IMR-90 (cell line): ENCODE measurements at regions of chr11 and their contacts with region 1.

Region 1: GRCh38 chr11:115324581-115325432 is 179.4 kb downstream of the CADM1 start:
- DNase-seq: peak; percentile 75
- ATAC-seq: peak; percentile 75
- H3K4me3 ChIP-seq: no peak overlapping the region
- H3K27ac ChIP-seq: no peak overlapping the region
- H3K4me1 ChIP-seq: peaks cover 2% of the 10 kb centered on the region; the same call in 1 of the 2 replicates
- H3K27me3 ChIP-seq: no peaks in the 10 kb centered on the region
- CTCF ChIP-seq: peak; percentile 83
- POLR2A ChIP-seq: no peak
- RAD21 ChIP-seq: peak; percentile 91

Region 2: DNA sequence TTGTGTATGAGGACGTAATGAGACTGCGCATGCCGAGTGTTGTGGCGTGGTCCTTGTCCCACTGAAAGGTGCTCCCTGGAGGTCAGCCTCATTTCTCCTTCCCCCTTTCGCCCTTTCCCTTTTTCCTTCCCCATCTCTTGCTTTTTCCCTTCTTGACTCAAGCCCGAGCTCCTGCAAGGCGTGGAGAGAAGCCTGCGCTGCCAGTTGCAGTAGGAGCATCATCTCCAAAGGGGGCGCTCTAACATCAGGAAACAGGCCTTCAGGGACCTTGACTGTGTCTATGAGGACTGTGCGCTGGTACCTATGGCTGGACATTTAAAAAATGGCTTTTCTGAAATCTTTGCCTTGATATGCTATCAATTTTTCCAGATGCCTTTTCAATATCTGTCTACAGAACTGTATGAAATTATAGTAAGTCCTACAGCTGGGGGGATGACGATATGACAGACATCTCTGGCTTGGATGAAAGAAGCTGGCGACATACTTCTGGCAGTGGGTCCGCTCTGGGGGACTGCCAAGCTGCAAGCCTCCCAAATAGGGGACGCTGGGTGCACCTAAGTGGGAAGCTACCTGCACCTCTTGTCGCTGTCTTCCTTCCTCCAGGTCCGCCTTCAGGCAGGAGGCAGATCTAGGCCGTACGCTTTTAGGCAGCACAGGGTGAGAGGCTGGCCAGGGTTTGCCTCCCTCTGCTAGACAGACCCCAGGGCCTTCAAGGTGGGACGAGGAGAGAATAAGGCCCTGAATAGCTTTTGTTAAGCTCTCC is 550.0 kb before region 1 on chr11:
- CTCF ChIA-PET with region 1: no interaction called
- POLR2A ChIA-PET with region 1: no interaction called
- dilution Hi-C with region 1: no loop called
- in situ Hi-C with region 1: no loop called
- intact Hi-C with region 1: loop called (anchors 1 kb)
- DNase-seq: peak; percentile 46
- ATAC-seq: peak; percentile 98
- H3K4me3 ChIP-seq: no peak overlapping the region
- H3K27ac ChIP-seq: no peak overlapping the region
- H3K4me1 ChIP-seq: no peaks in the 10 kb centered on the region
- H3K27me3 ChIP-seq: peaks cover 2% of the 10 kb centered on the region; the same call in 1 of the 2 replicates
- CTCF ChIP-seq: peak; percentile 78
- POLR2A ChIP-seq: no peak
- RAD21 ChIP-seq: peak; percentile 89

Region 3: GRCh38 chr11:115180272-115180671 is 144.5 kb before region 1 on chr11:
- CTCF ChIA-PET with region 1: no interaction called
- POLR2A ChIA-PET with region 1: no interaction called
- dilution Hi-C with region 1: no loop called
- in situ Hi-C with region 1: no loop called
- intact Hi-C with region 1: no loop called
- DNase-seq: no peak
- ATAC-seq: no peak
- H3K4me3 ChIP-seq: no peak overlapping the region
- H3K27ac ChIP-seq: no peak overlapping the region
- H3K4me1 ChIP-seq: no peaks in the 10 kb centered on the region
- H3K27me3 ChIP-seq: no peaks in the 10 kb centered on the region
- CTCF ChIP-seq: no peak
- POLR2A ChIP-seq: no peak
- RAD21 ChIP-seq: no peak

Region 4: DNA sequence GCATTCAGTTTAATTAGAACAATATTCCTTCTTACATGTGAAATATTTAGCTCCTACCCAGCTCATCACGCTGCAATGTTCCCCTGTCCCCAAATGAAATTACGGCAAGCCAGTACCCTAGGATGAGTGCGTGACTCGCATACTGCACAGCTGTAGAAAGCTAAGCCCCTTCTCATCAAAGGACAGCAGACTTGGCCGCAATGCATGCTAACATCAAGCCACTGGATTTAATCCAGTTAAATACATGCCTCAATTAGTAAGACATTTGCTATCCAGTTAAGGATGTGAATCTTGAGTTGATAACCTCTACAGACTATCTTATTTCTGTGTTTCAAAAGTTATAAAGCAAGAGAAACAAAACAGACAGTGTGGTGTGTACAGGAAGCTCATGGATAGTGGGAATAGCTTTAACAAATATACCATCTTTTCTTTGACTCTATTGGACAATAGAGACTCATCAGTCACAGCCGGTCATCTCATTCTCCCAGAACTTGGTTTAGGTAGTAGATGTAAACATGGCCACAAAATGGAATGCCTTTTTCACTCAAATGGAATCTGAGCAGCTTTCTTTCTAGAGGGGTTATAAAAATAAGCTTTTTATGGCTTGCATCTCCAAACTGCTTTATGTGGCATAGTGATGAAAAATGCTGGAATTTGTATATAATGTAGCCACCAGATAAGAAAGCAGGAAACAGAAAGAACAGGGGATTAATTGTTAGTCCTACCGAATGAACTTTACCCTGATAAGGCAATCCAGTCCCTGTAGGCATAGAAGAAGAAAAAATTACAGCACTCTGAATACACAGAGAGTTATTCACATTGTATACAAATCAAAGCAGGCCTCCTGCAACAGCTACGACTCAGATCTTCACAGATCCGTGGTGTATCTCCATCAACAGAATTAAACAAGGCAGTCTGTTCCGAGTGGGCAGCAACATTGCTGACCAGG is 44.7 kb before region 1 on chr11:
- CTCF ChIA-PET with region 1: no interaction called
- POLR2A ChIA-PET with region 1: no interaction called
- dilution Hi-C with region 1: no loop called
- in situ Hi-C with region 1: no loop called
- intact Hi-C with region 1: no loop called
- DNase-seq: peak; percentile 91
- ATAC-seq: peak; percentile 88
- H3K4me3 ChIP-seq: peak overlapping the region; percentile 2; the same call in 1 of the 2 replicates
- H3K27ac ChIP-seq: peak overlapping the region; percentile 88
- H3K4me1 ChIP-seq: peaks cover 14% of the 10 kb centered on the region
- H3K27me3 ChIP-seq: no peaks in the 10 kb centered on the region
- CTCF ChIP-seq: no peak
- POLR2A ChIP-seq: no peak
- RAD21 ChIP-seq: no peak

Region 5: GRCh38 chr11:115334932-115335788 is 10.4 kb after region 1 on chr11:
- CTCF ChIA-PET with region 1: no interaction called
- POLR2A ChIA-PET with region 1: no interaction called
- dilution Hi-C with region 1: no loop called
- in situ Hi-C with region 1: no loop called
- intact Hi-C with region 1: no loop called
- DNase-seq: peak; percentile 52
- ATAC-seq: peak; percentile 57
- H3K4me3 ChIP-seq: no peak overlapping the region
- H3K27ac ChIP-seq: no peak overlapping the region
- H3K4me1 ChIP-seq: no peaks in the 10 kb centered on the region
- H3K27me3 ChIP-seq: no peaks in the 10 kb centered on the region
- CTCF ChIP-seq: peak; percentile 73
- POLR2A ChIP-seq: no peak
- RAD21 ChIP-seq: peak; percentile 76

Region 6: GRCh38 chr11:115581871-115582639 is 257.2 kb after region 1 on chr11:
- CTCF ChIA-PET with region 1: no interaction called
- POLR2A ChIA-PET with region 1: no interaction called
- dilution Hi-C with region 1: no loop called
- in situ Hi-C with region 1: no loop called
- intact Hi-C with region 1: no loop called
- DNase-seq: peak; percentile 5
- ATAC-seq: no peak
- H3K4me3 ChIP-seq: no peak overlapping the region
- H3K27ac ChIP-seq: no peak overlapping the region
- H3K4me1 ChIP-seq: peaks cover 1% of the 10 kb centered on the region; the same call in 1 of the 2 replicates
- H3K27me3 ChIP-seq: peaks cover 8% of the 10 kb centered on the region
- CTCF ChIP-seq: 0 out of 2 replicates have a peak, but pooled peaks have one; percentile 4
- POLR2A ChIP-seq: no peak
- RAD21 ChIP-seq: no peak

Region 7: DNA sequence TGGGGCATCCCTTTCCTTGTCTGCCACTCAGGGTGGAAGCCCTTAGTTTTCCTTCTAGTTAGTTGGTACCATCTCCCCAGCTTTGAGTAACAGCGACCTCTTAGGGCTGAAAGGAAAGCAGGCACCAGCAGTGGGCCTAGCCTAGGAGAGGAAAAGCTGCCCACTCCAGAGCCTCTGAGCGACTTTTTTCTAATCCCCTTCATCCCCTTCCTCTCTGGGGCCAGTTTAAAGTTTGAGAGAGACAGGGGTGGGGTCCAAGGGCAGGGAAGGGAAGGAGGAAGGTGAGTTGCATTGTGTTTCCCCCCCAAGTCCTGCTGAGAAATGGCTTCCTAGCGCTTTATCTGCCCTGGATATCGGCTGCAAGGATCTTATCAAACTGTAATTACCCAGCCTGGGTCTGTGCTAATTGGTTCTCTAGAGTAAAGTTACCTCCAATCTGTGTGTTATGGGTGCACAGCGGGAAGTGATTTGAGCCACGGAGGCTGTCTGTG is 753.3 kb after region 1 on chr11:
- CTCF ChIA-PET with region 1: no interaction called
- POLR2A ChIA-PET with region 1: no interaction called
- dilution Hi-C with region 1: no loop called
- in situ Hi-C with region 1: no loop called
- intact Hi-C with region 1: loop called (anchors 5 kb)
- DNase-seq: peak; percentile 20
- ATAC-seq: peak; percentile 49; the same call in 1 of the 2 replicates
- H3K4me3 ChIP-seq: no peak overlapping the region
- H3K27ac ChIP-seq: no peak overlapping the region
- H3K4me1 ChIP-seq: no peaks in the 10 kb centered on the region
- H3K27me3 ChIP-seq: no peaks in the 10 kb centered on the region; the same call in 1 of the 2 replicates
- CTCF ChIP-seq: peak; percentile 52
- POLR2A ChIP-seq: no peak
- RAD21 ChIP-seq: peak; percentile 63

Region 8: DNA sequence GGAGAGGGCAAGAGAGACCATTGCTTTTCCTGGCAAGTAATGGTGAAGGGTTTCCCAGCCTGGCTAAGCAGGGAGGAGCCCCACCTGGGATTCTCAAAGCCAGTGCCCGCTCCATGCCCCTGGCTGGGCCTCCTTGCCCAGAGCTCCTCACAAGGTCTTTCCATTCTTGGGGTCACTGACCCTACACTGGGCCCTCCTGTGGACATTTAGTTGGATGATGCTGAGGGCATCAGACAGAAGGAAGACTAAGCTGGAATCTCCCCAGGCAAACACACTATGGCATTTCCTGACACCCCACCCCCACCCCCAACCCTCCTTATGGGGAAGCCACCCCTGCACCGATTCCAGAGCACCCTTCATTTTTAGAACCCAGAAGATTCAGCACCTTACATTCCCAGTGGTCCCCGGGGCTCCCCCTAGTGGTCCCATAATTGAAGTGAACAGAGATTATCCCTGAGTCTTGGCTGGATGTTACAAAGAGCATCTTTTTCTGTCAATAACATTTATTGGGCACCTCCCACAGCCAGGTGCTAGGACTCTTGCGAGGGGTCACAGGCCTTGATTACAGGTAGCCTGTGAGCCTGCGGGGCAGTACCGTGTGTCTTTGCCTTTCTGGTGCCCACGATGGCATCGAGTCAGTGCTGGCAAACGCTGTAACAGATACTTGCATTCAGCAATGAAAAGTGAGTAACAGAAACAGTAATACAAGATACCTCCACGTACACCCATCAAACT is 899.5 kb after region 1 on chr11:
- CTCF ChIA-PET with region 1: no interaction called
- POLR2A ChIA-PET with region 1: no interaction called
- dilution Hi-C with region 1: no loop called
- in situ Hi-C with region 1: no loop called
- intact Hi-C with region 1: loop called (anchors 1 kb)
- DNase-seq: peak; percentile 22
- ATAC-seq: peak; percentile 87
- H3K4me3 ChIP-seq: no peak overlapping the region
- H3K27ac ChIP-seq: no peak overlapping the region
- H3K4me1 ChIP-seq: no peaks in the 10 kb centered on the region
- H3K27me3 ChIP-seq: no peaks in the 10 kb centered on the region
- CTCF ChIP-seq: peak; percentile 60
- POLR2A ChIP-seq: no peak
- RAD21 ChIP-seq: peak; percentile 53

Region 9: DNA sequence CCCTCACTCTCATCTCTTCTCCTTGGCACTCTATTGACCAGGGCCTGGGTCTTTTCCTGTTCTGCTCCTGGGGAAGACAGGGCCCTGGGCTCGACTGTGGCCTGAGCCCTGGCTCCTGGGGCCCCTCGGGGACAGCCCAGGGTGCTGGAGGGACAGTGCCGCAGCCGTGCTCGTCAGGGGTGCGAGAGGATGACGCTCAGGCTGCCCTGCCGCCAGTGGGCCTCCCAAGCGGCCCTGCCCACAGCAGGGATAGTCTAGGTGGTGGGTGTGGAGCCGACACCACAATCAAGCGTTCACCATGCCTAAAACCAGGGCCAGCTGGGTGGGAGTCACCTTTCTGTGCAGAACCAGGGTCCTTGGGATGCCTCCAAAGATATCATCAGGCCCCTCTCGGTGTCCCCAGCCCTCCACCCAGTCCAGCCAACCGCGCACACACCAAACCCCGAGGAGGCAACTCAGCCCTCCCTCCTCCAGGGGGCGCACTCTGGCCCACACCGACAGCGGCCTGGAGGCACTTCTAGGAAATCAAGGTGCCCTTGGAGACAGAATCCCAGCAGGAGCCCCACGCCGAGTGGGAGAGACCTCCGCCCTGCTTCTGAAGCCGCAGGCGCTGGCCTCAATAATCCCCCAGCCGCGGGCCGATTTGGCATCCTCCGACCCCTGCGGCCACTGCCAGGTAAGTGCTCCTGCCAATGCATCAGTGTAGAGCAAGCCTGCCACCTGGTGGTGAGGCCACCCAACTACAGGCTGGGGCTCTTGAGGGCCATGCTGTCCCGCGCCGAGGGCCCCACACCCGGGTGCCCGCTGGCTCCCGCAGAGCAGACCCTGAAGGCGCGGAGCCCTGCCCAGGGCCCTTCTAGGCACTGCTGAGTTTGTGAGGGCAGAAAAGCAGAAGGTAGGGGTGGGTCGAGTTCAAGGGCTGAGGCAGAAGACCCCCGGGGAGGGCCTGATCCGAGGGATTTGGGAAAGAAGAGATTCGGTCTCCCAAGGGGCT is 951.5 kb after region 1 on chr11:
- CTCF ChIA-PET with region 1: no interaction called
- POLR2A ChIA-PET with region 1: no interaction called
- dilution Hi-C with region 1: no loop called
- in situ Hi-C with region 1: no loop called
- intact Hi-C with region 1: loop called (anchors 1 kb)
- DNase-seq: peak; percentile 30
- ATAC-seq: peak; percentile 60; the same call in 1 of the 2 replicates
- H3K4me3 ChIP-seq: no peak overlapping the region
- H3K27ac ChIP-seq: no peak overlapping the region
- H3K4me1 ChIP-seq: no peaks in the 10 kb centered on the region
- H3K27me3 ChIP-seq: no peaks in the 10 kb centered on the region; the same call in 1 of the 2 replicates
- CTCF ChIP-seq: peak; percentile 63
- POLR2A ChIP-seq: no peak
- RAD21 ChIP-seq: peak; percentile 74